PC-3 (cell line): ENCODE measurements at regions of chr1 and their contacts with region 1.

Region 1: GRCh38 chr1:68232354-68233148 is at the start of gene WLS:
- DNase-seq: peak; percentile 66
- ATAC-seq: peak; percentile 75
- H3K4me3 ChIP-seq: peak within 1 kb of the TSS; percentile 93
- H3K27ac ChIP-seq: no peak within 1 kb of the TSS
- H3K4me1 ChIP-seq: peaks cover 25% of the 10 kb centered on the region; the same call in 1 of the 2 replicates
- H3K27me3 ChIP-seq: no peaks in the 10 kb centered on the region
- CTCF ChIP-seq: no peak
- total RNA-seq, gene WLS: 15.3 and 19.1 TPM in 2 replicates

Region 2: DNA sequence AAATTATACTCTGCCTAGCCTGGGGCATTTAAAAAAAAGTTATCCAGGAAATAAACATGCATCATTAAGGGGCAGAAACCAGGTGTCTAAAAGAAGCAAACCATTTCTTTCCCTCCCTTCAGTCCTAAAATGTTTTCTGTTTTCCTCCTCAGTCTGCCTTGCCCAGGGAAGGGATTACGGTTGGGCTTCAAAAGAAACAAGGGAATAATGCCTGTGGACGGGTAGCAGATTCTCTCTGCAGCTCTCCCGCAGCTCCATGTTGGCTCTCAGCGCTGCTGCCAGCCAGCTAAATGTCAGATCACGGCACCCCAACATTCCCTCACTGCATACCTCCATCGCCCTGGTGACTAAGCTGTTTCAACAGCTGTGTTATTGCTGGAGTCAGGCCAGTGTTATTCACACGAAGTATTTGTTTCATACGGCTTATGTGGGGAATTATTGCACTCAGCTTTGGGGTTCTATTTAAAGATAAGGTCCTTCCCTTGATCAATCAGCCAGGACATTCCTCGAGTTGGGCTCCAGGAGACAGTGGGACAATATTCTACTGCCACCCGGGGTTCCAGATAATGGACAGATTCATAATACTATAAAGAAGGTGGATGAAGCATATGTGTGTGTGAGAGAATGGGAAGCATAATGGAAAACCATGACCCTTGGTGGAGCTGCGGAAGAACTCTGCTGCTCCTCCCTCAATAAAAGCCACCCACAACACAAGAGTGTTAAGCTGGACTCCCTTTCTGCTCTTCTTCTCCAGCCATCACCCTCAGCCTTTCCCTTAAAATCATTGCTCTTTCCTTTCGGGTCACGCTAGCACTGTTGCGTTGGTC is 58.4 kb before region 1 on chr1:
- CTCF ChIA-PET with region 1: interaction called, 3 read pairs
- POLR2A ChIA-PET with region 1: interaction called, 4 read pairs
- intact Hi-C with region 1: loop called (anchors 5 kb)
- DNase-seq: peak; percentile 85
- ATAC-seq: peak; percentile 50
- H3K4me3 ChIP-seq: peak overlapping the region; percentile 44
- H3K27ac ChIP-seq: 0 out of 2 replicates have a peak overlapping the region, but pooled peaks have one; percentile 13
- H3K4me1 ChIP-seq: peaks cover 57% of the 10 kb centered on the region
- H3K27me3 ChIP-seq: no peaks in the 10 kb centered on the region
- CTCF ChIP-seq: no peak